Breast epithelium (tissue), 4 donors: ENCODE measurements at regions of chr11 and their contacts with region 1.

Region 1: DNA sequence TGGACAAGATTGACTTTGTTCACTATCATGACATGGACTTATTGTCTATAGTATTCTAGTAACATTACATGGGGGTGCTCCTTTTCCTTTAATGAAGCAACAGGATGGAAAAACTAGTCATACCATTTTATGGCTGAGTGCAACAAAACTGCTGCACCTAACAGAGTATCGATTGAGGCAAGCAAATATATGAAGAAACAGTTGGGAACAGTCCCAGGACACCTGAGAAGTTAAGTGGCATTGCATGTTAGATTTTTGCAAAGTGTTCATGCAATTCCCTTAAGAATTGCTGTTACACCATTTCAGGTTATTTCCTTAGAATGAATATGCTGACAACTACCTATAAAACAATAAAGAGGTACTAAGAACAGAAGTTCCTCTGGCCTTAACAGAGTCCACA is 541.5 kb upstream of the ANO3 start:
- DNase-seq: no peak
- H3K4me3 ChIP-seq: no peak overlapping the region
- H3K27ac ChIP-seq: no peak overlapping the region
- H3K4me1 ChIP-seq: no peaks in the 10 kb centered on the region
- H3K27me3 ChIP-seq: no peaks in the 10 kb centered on the region
- CTCF ChIP-seq: no peak
- POLR2A ChIP-seq: no peak

Region 2: GRCh38 chr11:25350899-25351803 is 439.2 kb before region 1 on chr11:
- intact Hi-C with region 1: no loop called
- DNase-seq: no peak
- H3K4me3 ChIP-seq: no peak overlapping the region
- H3K27ac ChIP-seq: no peak overlapping the region
- H3K4me1 ChIP-seq: no peaks in the 10 kb centered on the region
- H3K27me3 ChIP-seq: no peaks in the 10 kb centered on the region
- CTCF ChIP-seq: no peak
- POLR2A ChIP-seq: no peak

Region 3: DNA sequence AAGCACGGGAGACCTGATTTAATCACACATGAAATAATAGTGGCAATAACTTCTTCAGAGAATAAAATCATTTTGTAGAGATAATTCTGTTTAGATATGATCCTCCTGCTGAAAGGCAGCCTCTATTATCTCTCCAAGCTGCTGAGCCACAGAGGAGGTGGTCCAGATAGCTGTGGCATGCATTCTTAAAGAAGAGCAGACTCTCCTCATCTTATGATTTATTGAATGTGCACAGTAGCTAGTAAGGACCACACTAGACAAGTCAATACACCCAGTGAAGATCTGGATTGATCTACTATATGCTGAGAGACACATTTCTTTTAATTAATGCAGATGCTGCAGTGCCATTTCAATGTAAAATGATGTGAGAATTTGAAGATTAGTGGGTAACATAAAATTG is 11.4 kb before region 1 on chr11:
- intact Hi-C with region 1: loop called (anchors 1 kb)
- DNase-seq: no peak
- H3K4me3 ChIP-seq: no peak overlapping the region
- H3K27ac ChIP-seq: no peak overlapping the region
- H3K4me1 ChIP-seq: no peaks in the 10 kb centered on the region
- H3K27me3 ChIP-seq: no peaks in the 10 kb centered on the region
- CTCF ChIP-seq: no peak
- POLR2A ChIP-seq: no peak